ENCODE measurements at regions of chr4 and their contacts with region 1.

Region 1: GRCh38 chr4:48269861-48270522 is 354 bp upstream of the TEC start:
- DNase-seq: peak; percentile 85
- H3K4me3 ChIP-seq: peak overlapping the region; percentile 27 to 66 (median 54)
- H3K27ac ChIP-seq: no peak overlapping the region
- H3K4me1 ChIP-seq: peaks cover 8% of the 10 kb centered on the region
- H3K27me3 ChIP-seq: no peaks in the 10 kb centered on the region
- CTCF ChIP-seq: peak in 1 of 2 donors; percentile 32

Region 2: DNA sequence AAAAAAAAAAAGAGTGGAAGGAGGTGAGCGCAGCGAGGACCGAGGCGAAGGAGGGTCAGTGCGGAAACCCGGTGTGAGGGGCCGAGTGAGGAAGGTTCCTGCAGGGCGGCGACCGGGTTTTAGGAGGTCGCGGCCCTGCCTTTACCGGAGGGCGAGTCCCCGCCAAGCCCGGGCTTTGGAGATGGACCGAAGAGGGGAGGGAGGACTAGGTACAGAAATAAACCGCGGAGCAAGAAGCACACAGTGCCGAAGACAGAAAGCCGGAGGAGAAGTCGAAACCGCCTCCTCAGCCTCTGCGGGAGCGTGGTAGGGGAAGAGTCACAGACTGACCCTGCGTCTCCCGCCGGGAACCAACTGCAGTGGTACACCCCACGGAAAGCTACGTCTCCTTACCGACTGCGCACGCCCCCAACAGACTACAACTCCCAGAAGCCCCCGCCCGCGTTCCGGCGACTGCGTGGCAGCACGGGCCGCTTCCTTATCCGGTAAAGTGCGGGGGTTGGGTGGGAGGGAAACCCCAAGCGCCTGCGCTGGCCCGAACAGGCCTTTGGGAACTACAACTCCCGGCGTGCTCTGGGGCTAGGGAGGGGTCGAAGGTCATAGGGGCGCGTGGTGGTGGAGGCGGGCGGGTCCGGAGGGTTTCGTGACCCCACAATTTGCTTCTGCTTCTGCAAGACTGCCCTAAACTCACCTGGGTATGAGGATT is 355.6 kb before region 1 on chr4 and contains the start of gene NFXL1:
- CTCF ChIA-PET with region 1: no interaction called
- dilution Hi-C with region 1: no loop called
- in situ Hi-C with region 1: no loop called
- intact Hi-C with region 1: loop called (anchors 5 kb)
- DNase-seq: peak; percentile 96
- H3K4me3 ChIP-seq: peak within 1 kb of the TSS; percentile 80 to 90 (median 88)
- H3K27ac ChIP-seq: peak within 1 kb of the TSS; percentile 77
- H3K4me1 ChIP-seq: peaks cover 13% of the 10 kb centered on the region
- H3K27me3 ChIP-seq: no peaks in the 10 kb centered on the region
- CTCF ChIP-seq: no peak
- total RNA-seq, gene NFXL1: 15.8 to 20.9 TPM

Region 3: GRCh38 chr4:47926639-47927258 is 343.2 kb before region 1 on chr4:
- CTCF ChIA-PET with region 1: no interaction called
- dilution Hi-C with region 1: no loop called
- in situ Hi-C with region 1: no loop called
- intact Hi-C with region 1: no loop called
- DNase-seq: peak; percentile 43
- H3K4me3 ChIP-seq: peak overlapping the region in 1 of 3 experiments; percentile 29
- H3K27ac ChIP-seq: no peak overlapping the region
- H3K4me1 ChIP-seq: peaks cover 8% of the 10 kb centered on the region
- H3K27me3 ChIP-seq: no peaks in the 10 kb centered on the region
- CTCF ChIP-seq: peak; percentile 74 to 86

Region 4: GRCh38 chr4:48027653-48028052 is 242.3 kb before region 1 on chr4:
- CTCF ChIA-PET with region 1: no interaction called
- dilution Hi-C with region 1: no loop called
- in situ Hi-C with region 1: no loop called
- intact Hi-C with region 1: loop called (anchors 10 kb)
- DNase-seq: no peak
- H3K4me3 ChIP-seq: no peak overlapping the region
- H3K27ac ChIP-seq: no peak overlapping the region
- H3K4me1 ChIP-seq: no peaks in the 10 kb centered on the region
- H3K27me3 ChIP-seq: no peaks in the 10 kb centered on the region
- CTCF ChIP-seq: no peak

Region 5: DNA sequence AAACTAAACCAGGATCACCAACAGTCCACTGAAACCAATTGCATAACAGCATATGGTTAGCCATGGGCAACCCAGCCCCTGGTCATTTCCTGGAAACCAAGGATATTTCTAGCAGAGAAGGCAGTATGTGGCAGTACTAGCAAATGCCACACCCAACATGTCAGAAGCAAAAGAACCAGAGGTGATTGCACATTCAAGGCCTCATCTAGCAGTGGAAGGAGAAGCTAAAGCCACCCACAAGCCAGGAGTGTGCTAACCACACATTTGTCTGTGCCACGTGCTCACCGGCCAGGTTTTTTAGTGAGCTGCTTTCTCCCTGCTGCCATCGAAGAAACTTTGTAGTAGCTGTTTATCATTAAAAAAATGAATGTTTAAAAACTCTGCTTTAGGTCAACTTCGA is 42.3 kb before region 1 on chr4:
- CTCF ChIA-PET with region 1: no interaction called
- dilution Hi-C with region 1: no loop called
- in situ Hi-C with region 1: no loop called
- intact Hi-C with region 1: loop called (anchors 5 kb)
- DNase-seq: peak; percentile 25
- H3K4me3 ChIP-seq: no peak overlapping the region
- H3K27ac ChIP-seq: no peak overlapping the region
- H3K4me1 ChIP-seq: peaks cover 12% of the 10 kb centered on the region
- H3K27me3 ChIP-seq: no peaks in the 10 kb centered on the region
- CTCF ChIP-seq: no peak

Measured in mammary epithelial cell (primary cell).